ENCODE measurements at regions of chr12 and their contacts with region 1.

Region 1: DNA sequence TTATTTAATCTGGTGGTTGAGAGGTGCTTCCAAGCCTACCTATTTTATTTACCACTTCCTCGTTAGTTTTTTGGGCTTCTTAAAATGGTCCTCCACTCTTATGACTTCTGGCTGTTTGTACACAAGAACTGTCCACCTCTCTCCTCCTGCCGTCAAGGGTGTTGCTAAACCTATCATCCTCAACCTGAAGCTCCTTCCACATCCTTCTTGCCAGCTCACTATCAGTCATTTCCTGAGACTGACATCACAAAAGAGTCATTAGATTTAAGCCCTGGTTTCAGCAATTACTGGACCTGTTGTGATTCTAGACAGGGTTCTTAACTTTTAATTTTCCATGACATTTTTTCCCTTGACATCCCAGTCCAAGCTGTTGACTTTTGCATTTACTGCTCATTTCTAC is 91.9 kb downstream of the BICD1 start:
- DNase-seq: no peak
- H3K4me3 Mint-ChIP-seq: no peak overlapping the region
- H3K27ac Mint-ChIP-seq: no peak overlapping the region
- H3K4me1 Mint-ChIP-seq: peaks cover 6% of the 10 kb centered on the region
- H3K27me3 Mint-ChIP-seq: no peaks in the 10 kb centered on the region

Region 2: DNA sequence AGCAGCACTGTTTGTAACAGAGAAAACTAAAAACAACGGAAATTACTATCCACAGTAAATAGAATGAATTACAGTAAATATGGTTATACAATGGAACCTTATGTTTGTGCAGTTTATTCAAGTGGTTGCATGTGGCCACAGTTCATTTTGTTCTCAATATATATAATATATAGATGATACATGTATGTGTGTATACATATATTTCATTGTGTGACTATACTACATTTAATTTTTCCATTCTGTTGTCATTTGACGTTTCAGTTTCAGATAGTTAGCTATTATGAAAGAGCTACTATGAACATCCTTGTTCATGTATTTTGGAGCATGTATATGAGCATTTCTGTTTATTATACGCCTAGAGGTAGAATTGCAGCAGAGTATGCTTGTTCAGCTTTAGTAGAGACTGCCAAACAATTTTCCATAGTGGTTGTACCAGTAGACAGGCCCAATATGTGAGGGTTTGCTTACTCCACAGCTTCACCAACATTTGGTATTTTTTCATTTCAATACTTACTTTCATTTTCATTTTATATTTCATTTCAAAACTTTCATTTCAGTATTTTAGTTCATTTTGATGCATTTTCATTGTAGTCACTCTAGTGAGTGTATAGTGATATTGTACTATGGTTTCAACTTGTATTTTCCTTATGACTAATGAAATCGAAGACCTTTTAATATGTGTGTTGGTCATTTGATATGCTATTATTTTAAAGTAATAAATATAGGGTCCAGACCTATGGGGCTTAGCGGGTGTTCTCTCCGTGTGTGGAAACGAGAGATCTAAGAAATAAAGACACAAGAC is 59.3 kb after region 1 on chr12:
- intact Hi-C with region 1: loop called (anchors 5 kb)
- DNase-seq: no peak
- H3K4me3 Mint-ChIP-seq: no peak overlapping the region
- H3K27ac Mint-ChIP-seq: no peak overlapping the region
- H3K4me1 Mint-ChIP-seq: peaks cover 5% of the 10 kb centered on the region
- H3K27me3 Mint-ChIP-seq: no peaks in the 10 kb centered on the region

Measured in activated CD4-positive, alpha-beta T cell treated with anti-CD3 and anti-CD28 coated beads, Interleukin-2, amount 10 ng/mL, durations not matched to agents 24 days and 14 days (primary cell).